Mammary epithelial cell (primary cell): ENCODE measurements at regions of chr13 and their contacts with region 1.

Region 1: DNA sequence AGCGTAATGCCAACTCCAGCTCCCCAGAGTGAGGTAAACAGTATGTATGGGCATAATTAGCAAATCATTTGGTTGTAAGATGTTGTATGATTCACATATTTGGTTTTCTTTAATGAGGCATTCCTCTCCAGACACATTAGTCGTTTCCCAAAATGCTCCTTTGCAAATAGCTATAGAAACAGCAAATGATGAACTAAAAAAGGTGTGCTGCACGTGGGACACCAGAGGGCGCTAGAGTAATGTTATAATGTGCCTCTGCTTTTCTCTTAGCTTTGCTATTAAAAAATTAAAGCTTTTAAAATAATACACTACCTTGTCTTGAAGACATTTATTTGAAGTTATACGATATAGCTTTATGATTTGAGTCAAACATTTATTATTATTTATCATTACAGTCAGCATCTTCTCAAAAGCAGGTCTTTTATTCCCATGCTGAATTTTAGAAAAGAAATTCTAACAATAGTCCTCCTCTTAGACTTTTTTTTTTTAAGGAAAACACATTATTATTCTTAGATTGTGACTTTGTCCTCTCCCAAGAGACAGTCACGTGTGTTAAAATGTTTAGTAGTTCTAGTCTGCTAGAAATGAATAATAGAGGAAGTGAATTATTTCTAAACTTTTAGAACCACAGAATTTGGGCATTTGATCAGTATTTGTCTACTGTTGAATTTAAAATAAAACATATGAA is 121.6 kb upstream of the FRY start:
- DNase-seq: peak; percentile 37
- H3K4me3 ChIP-seq: no peak overlapping the region
- H3K27ac ChIP-seq: no peak overlapping the region
- H3K4me1 ChIP-seq: no peaks in the 10 kb centered on the region
- H3K27me3 ChIP-seq: no peaks in the 10 kb centered on the region
- CTCF ChIP-seq: peak; percentile 81 to 85

Region 2: GRCh38 chr13:31945202-31945978 is 35.4 kb after region 1 on chr13:
- CTCF ChIA-PET with region 1: no interaction called
- dilution Hi-C with region 1: no loop called
- in situ Hi-C with region 1: no loop called
- intact Hi-C with region 1: loop called (anchors 2 kb)
- DNase-seq: peak; percentile 84
- H3K4me3 ChIP-seq: peak overlapping the region in 1 of 3 experiments; percentile 22
- H3K27ac ChIP-seq: peak overlapping the region; percentile 36
- H3K4me1 ChIP-seq: peaks cover 14% of the 10 kb centered on the region
- H3K27me3 ChIP-seq: no peaks in the 10 kb centered on the region
- CTCF ChIP-seq: no peak

Region 3: GRCh38 chr13:32019612-32020233 is 109.7 kb after region 1 on chr13:
- CTCF ChIA-PET with region 1: no interaction called
- dilution Hi-C with region 1: no loop called
- in situ Hi-C with region 1: loop called in 1 of 2 experiments (anchors 25 kb)
- intact Hi-C with region 1: loop called (anchors 5 kb)
- DNase-seq: peak; percentile 30
- H3K4me3 ChIP-seq: no peak overlapping the region
- H3K27ac ChIP-seq: no peak overlapping the region
- H3K4me1 ChIP-seq: no peaks in the 10 kb centered on the region
- H3K27me3 ChIP-seq: no peaks in the 10 kb centered on the region
- CTCF ChIP-seq: peak; percentile 47 to 79

Region 4: DNA sequence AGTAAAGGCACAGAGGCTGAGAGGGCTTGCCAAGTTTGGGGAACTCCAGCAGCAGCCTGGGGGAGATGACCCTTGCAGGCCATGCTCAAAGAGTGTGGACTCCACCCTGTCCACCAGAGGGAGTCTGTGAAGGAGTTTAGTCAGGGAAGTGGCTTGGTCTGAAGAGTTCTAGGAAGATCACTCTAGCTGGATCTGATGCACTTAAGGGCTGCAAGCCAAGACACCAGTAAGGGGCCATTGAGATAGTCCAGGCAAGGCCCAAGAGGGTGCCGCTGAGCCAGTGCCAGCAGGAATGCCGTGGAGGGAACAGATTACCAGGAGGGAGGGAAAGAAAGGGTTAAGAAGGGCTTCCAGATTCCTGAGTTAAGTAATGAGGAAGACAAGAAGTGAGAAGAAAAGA is 336.5 kb after region 1 on chr13:
- CTCF ChIA-PET with region 1: interaction called, 11 read pairs
- dilution Hi-C with region 1: no loop called
- in situ Hi-C with region 1: no loop called
- intact Hi-C with region 1: loop called (anchors 5 kb)
- DNase-seq: peak; percentile 61
- H3K4me3 ChIP-seq: no peak overlapping the region
- H3K27ac ChIP-seq: no peak overlapping the region
- H3K4me1 ChIP-seq: no peaks in the 10 kb centered on the region
- H3K27me3 ChIP-seq: no peaks in the 10 kb centered on the region
- CTCF ChIP-seq: peak; percentile 87 to 90

Region 5: GRCh38 chr13:32278426-32278825 is 368.4 kb after region 1 on chr13:
- CTCF ChIA-PET with region 1: no interaction called
- dilution Hi-C with region 1: no loop called
- in situ Hi-C with region 1: no loop called
- intact Hi-C with region 1: no loop called
- DNase-seq: peak; percentile 68
- H3K4me3 ChIP-seq: no peak overlapping the region
- H3K27ac ChIP-seq: no peak overlapping the region
- H3K4me1 ChIP-seq: peaks cover 6% of the 10 kb centered on the region
- H3K27me3 ChIP-seq: no peaks in the 10 kb centered on the region
- CTCF ChIP-seq: no peak

Region 6: DNA sequence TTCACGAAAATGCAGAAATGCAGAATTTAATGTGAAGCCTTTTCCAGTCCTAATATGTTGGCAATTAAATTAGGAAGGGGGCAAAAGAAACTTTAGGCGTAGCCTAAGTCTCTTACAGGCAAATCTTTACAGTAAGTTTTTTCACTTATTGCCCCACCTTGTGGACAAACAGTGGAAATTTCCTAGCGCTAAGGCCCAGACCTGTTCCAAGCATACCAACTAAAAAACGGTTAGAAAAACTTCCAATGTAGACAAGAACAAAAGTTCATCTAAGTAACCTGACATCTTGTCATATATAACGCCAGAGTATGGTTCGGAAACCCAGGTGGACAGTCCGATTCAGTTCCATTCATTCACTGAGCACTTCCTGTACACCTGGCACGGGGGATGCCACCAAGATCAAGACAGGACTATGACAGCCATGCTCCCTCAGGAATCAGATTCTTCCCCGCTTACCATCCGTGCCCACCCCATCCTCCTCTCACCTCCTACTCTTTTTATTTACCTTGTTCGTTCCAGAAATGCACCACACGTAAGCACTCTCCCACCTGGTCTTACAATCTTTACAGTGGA is 400.2 kb after region 1 on chr13:
- CTCF ChIA-PET with region 1: no interaction called
- dilution Hi-C with region 1: no loop called
- in situ Hi-C with region 1: loop called (anchors 10 to 25 kb)
- intact Hi-C with region 1: loop called (anchors 1 kb)
- DNase-seq: peak; percentile 37
- H3K4me3 ChIP-seq: no peak overlapping the region
- H3K27ac ChIP-seq: no peak overlapping the region
- H3K4me1 ChIP-seq: peaks cover 5% of the 10 kb centered on the region
- H3K27me3 ChIP-seq: no peaks in the 10 kb centered on the region
- CTCF ChIP-seq: peak; percentile 56 to 71

Region 7: GRCh38 chr13:32581177-32581786 is 671.3 kb after region 1 on chr13:
- CTCF ChIA-PET with region 1: interaction called, 3 read pairs
- dilution Hi-C with region 1: no loop called
- in situ Hi-C with region 1: no loop called
- intact Hi-C with region 1: loop called (anchors 2 kb)
- DNase-seq: no peak
- H3K4me3 ChIP-seq: no peak overlapping the region
- H3K27ac ChIP-seq: no peak overlapping the region
- H3K4me1 ChIP-seq: peaks cover 5% of the 10 kb centered on the region
- H3K27me3 ChIP-seq: no peaks in the 10 kb centered on the region
- CTCF ChIP-seq: peak; percentile 55